ENCODE measurements at regions of chr2 and their contacts with region 1.

Region 1: DNA sequence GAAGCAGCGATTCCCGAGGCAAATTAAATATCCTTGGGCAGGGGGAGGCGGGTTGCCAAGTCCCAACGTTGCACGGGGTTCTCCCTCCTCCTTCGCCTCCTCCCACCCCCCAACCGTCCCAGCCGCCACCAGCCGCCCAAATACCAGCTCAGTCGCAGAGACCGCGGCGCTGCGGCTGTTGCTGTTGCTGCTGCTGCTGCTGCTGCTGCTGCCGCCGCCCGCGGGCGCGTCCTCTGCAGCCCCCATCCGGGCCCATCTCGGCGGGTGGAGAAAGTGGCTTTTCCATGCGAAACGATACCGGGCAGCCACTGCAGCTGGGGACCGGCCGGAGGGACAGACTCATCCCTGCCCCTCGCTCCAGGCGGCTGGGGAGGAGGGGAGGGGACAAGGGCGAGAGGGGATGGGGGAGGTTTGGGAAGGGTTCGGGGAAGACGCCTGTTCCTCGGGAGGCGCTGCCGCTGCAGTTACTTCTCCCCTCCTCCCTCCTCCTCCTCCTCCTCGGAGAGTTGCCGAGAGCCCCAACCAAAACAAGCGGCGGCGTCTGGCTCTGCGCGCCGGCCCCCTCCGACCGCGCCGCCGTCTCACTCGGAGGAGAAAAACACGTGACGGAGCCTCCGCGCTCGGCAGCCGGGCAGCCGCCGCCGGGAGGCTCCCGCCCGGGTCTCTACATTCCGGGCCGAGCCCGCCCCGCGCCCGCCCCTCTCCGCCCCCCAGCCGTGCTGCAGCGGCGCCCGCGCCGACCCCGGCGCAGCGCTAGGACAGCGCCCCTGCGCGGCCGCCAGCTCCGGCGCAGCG is at the start of gene IRS1:
- DNase-seq: peak in 8 of 9 donors; percentile 35 to 77 (median 61)
- ATAC-seq: peak; percentile 76
- H3K4me3 ChIP-seq: peak within 1 kb of the TSS; percentile 77
- H3K4me3 Mint-ChIP-seq: peak within 1 kb of the TSS; percentile 89 to 97 (median 91)
- H3K27ac ChIP-seq: peak within 1 kb of the TSS; percentile 70
- H3K27ac Mint-ChIP-seq: peak within 1 kb of the TSS; percentile 52 to 92 (median 75)
- H3K4me1 ChIP-seq: peaks cover 9 to 13% of the 10 kb centered on the region in 2 donors
- H3K4me1 Mint-ChIP-seq: peaks cover 11 to 40% (median 26%) of the 10 kb centered on the region in 7 donors
- H3K27me3 ChIP-seq: no peaks in the 10 kb centered on the region
- H3K27me3 Mint-ChIP-seq: peaks cover 2 to 14% (median 11%) of the 10 kb centered on the region in 5 donors
- total RNA-seq, gene IRS1: 1.3 to 7.1 (median 4.4) TPM

Region 2: GRCh38 chr2:225660262-225661131 is 1138.9 kb before region 1 on chr2:
- CTCF ChIA-PET with region 1: interaction called, 10 read pairs
- POLR2A ChIA-PET with region 1: no interaction called
- intact Hi-C with region 1: no loop called
- DNase-seq: peak; percentile 37 to 71 (median 60)
- ATAC-seq: peak; percentile 83
- H3K4me3 ChIP-seq: no peak overlapping the region
- H3K4me3 Mint-ChIP-seq: no peak overlapping the region
- H3K27ac ChIP-seq: no peak overlapping the region
- H3K27ac Mint-ChIP-seq: no peak overlapping the region
- H3K4me1 ChIP-seq: no peaks in the 10 kb centered on the region
- H3K4me1 Mint-ChIP-seq: no peaks in the 10 kb centered on the region
- H3K27me3 ChIP-seq: peaks cover 0 to 2% of the 10 kb centered on the region in 2 donors
- H3K27me3 Mint-ChIP-seq: peaks cover 15 to 23% (median 20%) of the 10 kb centered on the region in 5 donors

Region 3: GRCh38 chr2:226023383-226023782 is 776.0 kb before region 1 on chr2:
- CTCF ChIA-PET with region 1: interaction called, 3 read pairs
- POLR2A ChIA-PET with region 1: no interaction called
- intact Hi-C with region 1: loop called in 1 of 2 experiments (anchors 2 kb)
- DNase-seq: no peak
- ATAC-seq: no peak
- H3K4me3 ChIP-seq: no peak overlapping the region
- H3K4me3 Mint-ChIP-seq: no peak overlapping the region
- H3K27ac ChIP-seq: no peak overlapping the region
- H3K27ac Mint-ChIP-seq: no peak overlapping the region
- H3K4me1 ChIP-seq: no peaks in the 10 kb centered on the region
- H3K4me1 Mint-ChIP-seq: no peaks in the 10 kb centered on the region
- H3K27me3 ChIP-seq: no peaks in the 10 kb centered on the region
- H3K27me3 Mint-ChIP-seq: peaks cover 0 to 24% (median 3%) of the 10 kb centered on the region in 5 donors

Region 4: DNA sequence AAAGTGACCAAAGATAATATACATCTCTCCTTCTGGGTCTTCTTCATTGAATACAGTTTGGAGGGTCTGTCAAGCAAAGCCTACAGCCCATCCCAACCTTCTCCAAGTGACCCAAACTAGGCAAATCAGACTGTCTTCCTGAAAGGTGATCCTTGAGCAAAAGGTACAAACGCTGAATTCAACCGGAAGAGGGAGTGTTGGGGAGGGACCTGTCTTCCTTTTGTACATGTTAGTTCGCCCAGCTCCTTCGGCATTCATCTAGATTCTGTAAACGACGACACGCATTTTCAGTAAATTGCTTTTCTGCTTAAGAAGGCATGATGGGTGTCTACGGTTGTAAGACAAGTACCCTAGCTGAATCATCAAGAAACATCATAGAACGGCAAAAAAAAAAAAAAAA is 291.9 kb before region 1 on chr2:
- CTCF ChIA-PET with region 1: interaction called, 3 read pairs
- POLR2A ChIA-PET with region 1: no interaction called
- intact Hi-C with region 1: loop called in 1 of 2 experiments (anchors 1 kb)
- DNase-seq: no peak
- ATAC-seq: no peak
- H3K4me3 ChIP-seq: no peak overlapping the region
- H3K4me3 Mint-ChIP-seq: no peak overlapping the region
- H3K27ac ChIP-seq: no peak overlapping the region
- H3K27ac Mint-ChIP-seq: no peak overlapping the region
- H3K4me1 ChIP-seq: no peaks in the 10 kb centered on the region
- H3K4me1 Mint-ChIP-seq: no peaks in the 10 kb centered on the region
- H3K27me3 ChIP-seq: no peaks in the 10 kb centered on the region
- H3K27me3 Mint-ChIP-seq: peaks cover 8 to 24% (median 17%) of the 10 kb centered on the region in 5 donors

Region 5: GRCh38 chr2:226701052-226701451 is 98.3 kb before region 1 on chr2:
- CTCF ChIA-PET with region 1: no interaction called
- POLR2A ChIA-PET with region 1: no interaction called
- intact Hi-C with region 1: no loop called
- DNase-seq: no peak
- ATAC-seq: no peak
- H3K4me3 ChIP-seq: no peak overlapping the region
- H3K4me3 Mint-ChIP-seq: no peak overlapping the region
- H3K27ac ChIP-seq: no peak overlapping the region
- H3K27ac Mint-ChIP-seq: no peak overlapping the region
- H3K4me1 ChIP-seq: no peaks in the 10 kb centered on the region
- H3K4me1 Mint-ChIP-seq: peaks cover 0 to 5% (median 0%) of the 10 kb centered on the region in 7 donors
- H3K27me3 ChIP-seq: no peaks in the 10 kb centered on the region
- H3K27me3 Mint-ChIP-seq: peaks cover 4 to 13% (median 12%) of the 10 kb centered on the region in 5 donors

Region 6: DNA sequence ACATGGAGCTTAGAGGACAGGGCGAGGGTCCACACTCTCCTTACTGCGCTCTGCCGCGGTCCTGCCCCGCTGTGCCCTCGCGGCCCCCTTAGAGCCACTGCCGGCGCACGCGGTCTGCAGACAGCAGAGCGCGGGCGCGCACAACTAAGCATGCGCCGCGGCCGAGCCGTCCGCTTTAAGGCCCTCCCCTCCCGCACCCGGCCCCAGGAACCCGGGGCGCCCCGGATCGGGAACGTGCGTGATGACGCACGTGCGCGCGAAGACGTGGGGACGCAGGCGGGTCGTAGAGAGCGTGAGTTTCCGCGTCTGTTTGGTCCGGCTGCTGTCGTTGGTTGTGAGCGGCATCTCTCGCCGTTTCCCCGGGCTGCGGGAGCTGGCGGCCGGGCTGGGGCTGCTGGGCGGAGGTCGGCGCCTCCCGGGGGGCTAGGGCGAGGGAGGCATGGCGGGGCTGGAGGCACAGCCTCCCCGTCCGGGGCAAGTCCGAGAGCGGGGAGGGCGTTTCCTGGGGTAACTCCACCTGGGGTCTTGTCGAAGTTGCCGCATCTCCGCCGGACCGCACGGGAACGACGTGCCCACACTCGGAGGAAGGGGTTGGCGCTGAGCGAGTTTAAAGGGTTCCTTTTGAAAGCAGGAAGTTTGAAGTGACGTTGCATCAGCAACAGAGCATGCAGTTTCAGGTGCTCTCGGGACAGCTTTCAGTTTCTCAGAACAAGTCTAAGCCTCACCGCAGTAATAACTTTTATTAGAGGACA is 36.6 kb after region 1 on chr2 and contains the start of gene RHBDD1:
- CTCF ChIA-PET with region 1: interaction called, 8 read pairs
- POLR2A ChIA-PET with region 1: interaction called, 17 read pairs
- intact Hi-C with region 1: loop called (anchors 1 kb)
- DNase-seq: peak; percentile 88 to 96 (median 94)
- ATAC-seq: peak; percentile 94
- H3K4me3 ChIP-seq: peak within 1 kb of the TSS; percentile 82
- H3K4me3 Mint-ChIP-seq: peak within 1 kb of the TSS; percentile 85 to 99 (median 97)
- H3K27ac ChIP-seq: peak within 1 kb of the TSS; percentile 99
- H3K27ac Mint-ChIP-seq: peak within 1 kb of the TSS; percentile 95 to 100 (median 100)
- H3K4me1 ChIP-seq: peaks cover 27 to 45% of the 10 kb centered on the region in 2 donors
- H3K4me1 Mint-ChIP-seq: peaks cover 20 to 67% (median 64%) of the 10 kb centered on the region in 7 donors
- H3K27me3 ChIP-seq: no peaks in the 10 kb centered on the region
- H3K27me3 Mint-ChIP-seq: no peaks in the 10 kb centered on the region
- total RNA-seq, gene RHBDD1: 42.9 to 70.8 (median 62.1) TPM

Region 7: DNA sequence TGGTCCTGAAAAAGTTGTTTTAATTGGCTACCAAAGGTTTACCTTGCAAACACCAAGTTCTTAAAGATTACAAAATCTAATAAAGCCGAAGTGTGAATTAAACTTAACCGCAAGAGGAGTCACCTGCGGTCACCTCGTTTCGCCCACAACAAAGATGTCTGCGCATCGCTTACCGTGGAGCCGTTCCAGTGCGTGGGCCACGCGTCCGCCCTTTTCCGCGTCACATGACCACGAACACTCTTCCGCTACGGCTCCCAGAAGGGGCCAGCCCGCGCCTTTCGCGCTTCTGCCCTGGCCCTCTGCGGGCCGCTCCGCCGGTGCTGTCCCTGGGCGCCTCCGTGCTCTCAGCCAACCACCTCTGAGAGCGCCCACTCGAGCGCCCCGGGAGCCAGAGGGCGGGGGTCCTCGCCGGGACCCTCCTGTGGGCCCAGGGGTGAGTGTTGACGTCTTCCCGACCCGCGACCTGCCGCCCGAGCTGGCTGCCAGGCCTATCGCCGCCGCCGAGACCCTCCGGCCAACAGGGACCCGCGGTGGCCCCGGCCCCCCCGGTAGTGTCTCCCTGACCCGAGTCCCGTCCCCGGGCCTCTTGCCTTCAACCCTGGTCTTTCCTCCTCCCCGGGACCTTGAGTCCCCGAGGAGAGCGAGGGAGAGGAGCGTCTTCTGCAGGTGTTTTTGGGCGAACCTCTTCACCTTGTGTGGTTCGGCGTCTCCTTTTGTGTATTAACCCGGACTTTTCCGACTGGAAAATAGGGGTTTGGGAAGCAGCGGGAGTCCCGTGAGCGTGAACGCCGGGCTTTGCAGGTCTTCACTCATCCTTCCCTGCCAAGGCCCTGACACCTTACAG is 525.8 kb after region 1 on chr2 and contains the start of gene MFF:
- CTCF ChIA-PET with region 1: interaction called, 3 read pairs
- POLR2A ChIA-PET with region 1: no interaction called
- intact Hi-C with region 1: loop called in 1 of 2 experiments (anchors 2 kb)
- DNase-seq: peak; percentile 82 to 93 (median 93)
- ATAC-seq: peak; percentile 99
- H3K4me3 ChIP-seq: peak within 1 kb of the TSS; percentile 76
- H3K4me3 Mint-ChIP-seq: peak within 1 kb of the TSS; percentile 91 to 97 (median 96)
- H3K27ac ChIP-seq: peak within 1 kb of the TSS; percentile 92
- H3K27ac Mint-ChIP-seq: peak within 1 kb of the TSS; percentile 83 to 97 (median 95)
- H3K4me1 ChIP-seq: peaks cover 4 to 24% of the 10 kb centered on the region in 2 donors
- H3K4me1 Mint-ChIP-seq: peaks cover 8 to 59% (median 46%) of the 10 kb centered on the region in 7 donors
- H3K27me3 ChIP-seq: no peaks in the 10 kb centered on the region
- H3K27me3 Mint-ChIP-seq: peaks cover 0 to 13% (median 0%) of the 10 kb centered on the region in 5 donors
- total RNA-seq, gene MFF: 51.7 to 64.7 (median 61.8) TPM